Naive thymus-derived CD4-positive, alpha-beta T cell (primary cell): ENCODE measurements at regions of chrX and their contacts with region 1.

Region 1: GRCh38 chrX:86002076-86002896 is 45.1 kb downstream of the CHM start:
- DNase-seq: peak in 6 of 9 donors; percentile 1 to 28 (median 16)
- ATAC-seq: no peak
- H3K4me3 ChIP-seq: no peak overlapping the region
- H3K4me3 Mint-ChIP-seq: peak overlapping the region in 7 of 10 donors; percentile 3 to 55 (median 40)
- H3K27ac ChIP-seq: no peak overlapping the region
- H3K27ac Mint-ChIP-seq: peak overlapping the region in 4 of 9 donors; percentile 12 to 70 (median 46)
- H3K4me1 ChIP-seq: peaks cover 3 to 8% of the 10 kb centered on the region in 2 donors
- H3K4me1 Mint-ChIP-seq: peaks cover 26 to 63% (median 51%) of the 10 kb centered on the region in 7 donors
- H3K27me3 ChIP-seq: no peaks in the 10 kb centered on the region
- H3K27me3 Mint-ChIP-seq: no peaks in the 10 kb centered on the region

Region 2: GRCh38 chrX:86014421-86014820 is 12.1 kb after region 1 on chrX:
- CTCF ChIA-PET with region 1: no interaction called
- POLR2A ChIA-PET with region 1: no interaction called
- intact Hi-C with region 1: no loop called
- DNase-seq: no peak
- ATAC-seq: peak; percentile 37
- H3K4me3 ChIP-seq: no peak overlapping the region
- H3K4me3 Mint-ChIP-seq: peak overlapping the region in 3 of 10 donors; percentile 2 to 37 (median 8)
- H3K27ac ChIP-seq: no peak overlapping the region
- H3K27ac Mint-ChIP-seq: peak overlapping the region in 4 of 9 donors; percentile 3 to 58 (median 44)
- H3K4me1 ChIP-seq: no peaks in the 10 kb centered on the region
- H3K4me1 Mint-ChIP-seq: peaks cover 9 to 46% (median 31%) of the 10 kb centered on the region in 7 donors
- H3K27me3 ChIP-seq: no peaks in the 10 kb centered on the region
- H3K27me3 Mint-ChIP-seq: no peaks in the 10 kb centered on the region

Region 3: GRCh38 chrX:86047174-86047935 is 45.1 kb after region 1 on chrX and contains the start of gene CHM:
- CTCF ChIA-PET with region 1: no interaction called
- POLR2A ChIA-PET with region 1: no interaction called
- intact Hi-C with region 1: loop called in 1 of 2 experiments (anchors 2 kb)
- DNase-seq: peak; percentile 21 to 74 (median 67)
- ATAC-seq: peak; percentile 96
- H3K4me3 ChIP-seq: peak within 1 kb of the TSS; percentile 71
- H3K4me3 Mint-ChIP-seq: no peak within 1 kb of the TSS
- H3K27ac ChIP-seq: peak within 1 kb of the TSS; percentile 95
- H3K27ac Mint-ChIP-seq: peak within 1 kb of the TSS in 1 of 9 donors; percentile 29
- H3K4me1 ChIP-seq: peaks cover 0 to 7% of the 10 kb centered on the region in 2 donors
- H3K4me1 Mint-ChIP-seq: peaks cover 2 to 21% (median 12%) of the 10 kb centered on the region in 7 donors
- H3K27me3 ChIP-seq: no peaks in the 10 kb centered on the region
- H3K27me3 Mint-ChIP-seq: peaks cover 0 to 5% (median 0%) of the 10 kb centered on the region in 5 donors
- total RNA-seq, gene CHM: 9.0 to 22.6 (median 19.4) TPM

Region 4: DNA sequence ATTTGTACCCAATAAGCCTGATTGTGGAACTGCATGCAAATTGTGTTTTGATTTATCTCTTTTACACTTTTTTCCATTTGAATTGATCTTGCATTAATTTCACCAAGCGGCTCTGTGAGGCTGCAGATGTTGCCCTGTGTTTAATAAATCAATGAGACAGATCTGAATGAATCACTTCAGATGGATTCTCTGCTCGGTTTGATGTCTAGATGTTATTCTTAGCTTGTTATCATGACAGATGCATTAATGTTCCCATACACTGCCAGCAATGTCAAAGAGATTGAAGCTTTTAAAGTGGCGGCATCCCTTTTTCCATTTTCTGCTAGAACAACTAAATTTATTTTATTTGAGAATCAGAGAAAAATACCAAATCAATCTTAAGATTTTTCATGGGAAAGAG is 152.3 kb after region 1 on chrX:
- CTCF ChIA-PET with region 1: no interaction called
- POLR2A ChIA-PET with region 1: no interaction called
- intact Hi-C with region 1: no loop called
- DNase-seq: no peak
- ATAC-seq: no peak
- H3K4me3 ChIP-seq: no peak overlapping the region
- H3K4me3 Mint-ChIP-seq: no peak overlapping the region
- H3K27ac ChIP-seq: no peak overlapping the region
- H3K27ac Mint-ChIP-seq: no peak overlapping the region
- H3K4me1 ChIP-seq: peaks cover 0 to under 1% of the 10 kb centered on the region in 2 donors
- H3K4me1 Mint-ChIP-seq: peaks cover 0 to 5% (median under 1%) of the 10 kb centered on the region in 7 donors
- H3K27me3 ChIP-seq: peaks cover 0 to 3% of the 10 kb centered on the region in 2 donors
- H3K27me3 Mint-ChIP-seq: peaks cover 7 to 25% (median 19%) of the 10 kb centered on the region in 5 donors